ENCODE measurements at regions of chr17 and their contacts with region 1.

Region 1: GRCh38 chr17:9828296-9829295 is 2.9 kb downstream of the GLP2R start:
- DNase-seq: no peak
- H3K4me3 ChIP-seq: peak overlapping the region in 3 of 4 donors; percentile 3 to 21 (median 6)
- H3K27ac ChIP-seq: peak overlapping the region; percentile 45 to 79 (median 66)
- H3K4me1 ChIP-seq: peaks cover 0 to 42% (median 42%) of the 10 kb centered on the region in 4 donors
- H3K27me3 ChIP-seq: no peaks in the 10 kb centered on the region
- CTCF ChIP-seq: no peak
- EP300 ChIP-seq: no peak
- POLR2A ChIP-seq: no peak

Region 2: DNA sequence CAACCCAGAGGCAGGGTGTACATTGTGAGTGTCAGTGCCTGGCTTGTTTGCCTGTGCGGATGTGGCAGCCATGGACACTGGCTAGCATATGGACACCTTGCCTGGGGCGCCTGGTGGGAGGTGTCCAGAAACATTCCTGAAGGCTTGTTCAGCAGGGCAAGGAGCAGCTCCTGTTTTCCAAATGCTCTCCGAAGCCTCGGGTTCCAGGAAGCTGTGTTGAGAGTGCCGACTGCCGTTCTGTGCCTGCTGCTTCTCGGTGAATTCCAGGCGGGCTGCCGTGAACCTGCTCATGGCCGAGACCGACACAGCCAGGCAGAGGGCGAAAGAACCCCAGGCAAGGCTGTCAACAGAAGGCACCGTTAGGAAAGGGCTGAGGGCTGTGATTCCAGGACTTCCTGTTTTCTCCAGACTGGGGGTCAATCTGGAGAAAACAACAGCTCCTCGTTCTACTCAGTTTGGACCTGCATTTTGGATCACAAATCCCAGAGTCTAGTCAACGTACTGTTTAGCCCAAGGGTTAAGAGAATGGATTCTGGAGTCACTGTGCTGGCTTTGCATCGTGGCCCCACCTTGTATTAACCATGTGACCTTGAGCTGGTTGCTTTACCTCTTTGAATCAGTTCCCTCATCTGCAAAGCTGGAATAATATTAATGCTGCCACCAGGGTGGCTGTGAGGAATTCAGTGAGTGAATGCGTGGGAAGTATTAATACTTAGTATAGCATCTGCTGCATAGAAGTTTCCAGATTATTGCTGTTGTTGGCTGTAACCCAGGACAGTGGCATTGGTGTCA is 26.1 kb before region 1 on chr17:
- intact Hi-C with region 1: no loop called
- DNase-seq: no peak
- H3K4me3 ChIP-seq: no peak overlapping the region
- H3K27ac ChIP-seq: no peak overlapping the region
- H3K4me1 ChIP-seq: no peaks in the 10 kb centered on the region
- H3K27me3 ChIP-seq: no peaks in the 10 kb centered on the region
- CTCF ChIP-seq: no peak
- EP300 ChIP-seq: no peak
- POLR2A ChIP-seq: no peak

Region 3: GRCh38 chr17:9874719-9875118 is 46.1 kb after region 1 on chr17:
- intact Hi-C with region 1: loop called (anchors 5 kb)
- DNase-seq: no peak
- H3K4me3 ChIP-seq: no peak overlapping the region
- H3K27ac ChIP-seq: peak overlapping the region; percentile 30 to 62 (median 55)
- H3K4me1 ChIP-seq: peaks cover 0 to 29% (median 22%) of the 10 kb centered on the region in 4 donors
- H3K27me3 ChIP-seq: no peaks in the 10 kb centered on the region
- CTCF ChIP-seq: peak in 1 of 3 experiments; percentile 7
- EP300 ChIP-seq: no peak
- POLR2A ChIP-seq: no peak

Measured in esophagus muscularis mucosa (tissue), 4 donors.